Activated CD8-positive, alpha-beta T cell treated with anti-CD3 and anti-CD28 coated beads for 36 hours (primary cell): ENCODE measurements at regions of chr20 and their contacts with region 1.

Region 1: DNA sequence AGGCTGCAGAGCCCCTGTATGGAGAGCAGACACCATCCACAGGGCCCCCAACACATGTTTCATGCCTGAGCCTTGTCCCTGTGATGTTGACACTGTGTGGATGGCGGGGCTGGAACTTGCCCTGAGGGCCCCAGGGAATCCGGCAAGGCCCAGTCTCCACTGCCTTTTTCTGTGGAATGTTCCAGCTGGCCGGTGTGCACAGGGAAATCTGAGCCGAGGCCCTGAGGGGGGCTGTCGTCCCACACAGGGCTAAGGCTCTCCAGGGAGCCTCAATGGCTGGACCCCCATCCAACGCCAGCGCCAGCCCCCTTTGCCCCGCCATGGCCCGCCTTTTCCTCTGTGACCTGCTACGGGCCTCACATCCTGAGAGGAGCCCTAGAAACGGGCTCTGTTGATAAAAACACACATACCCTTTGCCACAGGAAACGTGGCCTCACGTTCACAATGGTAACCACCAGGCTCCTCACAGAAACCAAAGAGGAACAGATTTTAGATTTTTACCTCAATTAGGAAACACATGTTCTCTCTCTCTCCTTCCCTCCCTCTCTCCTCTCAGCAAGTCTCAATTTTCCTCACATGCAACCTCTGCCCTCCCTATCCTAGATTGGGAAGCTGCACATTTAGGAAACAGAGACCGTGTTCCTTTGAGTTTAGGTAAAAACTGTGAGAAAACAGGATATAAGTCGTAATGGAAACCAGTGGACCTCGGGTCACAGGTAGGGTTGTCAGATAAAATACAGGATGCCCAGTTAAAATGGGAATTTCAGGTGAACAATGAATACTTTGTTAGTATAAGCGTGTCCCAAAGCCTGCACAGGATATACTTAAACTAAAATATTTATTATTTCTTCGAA is 13.7 kb upstream of the ZNF831 start:
- DNase-seq: peak; percentile 90
- ATAC-seq: peak; percentile 61
- H3K4me3 Mint-ChIP-seq: peak overlapping the region; percentile 54
- H3K27ac Mint-ChIP-seq: peak overlapping the region; percentile 95
- H3K4me1 Mint-ChIP-seq: peaks cover 85% of the 10 kb centered on the region
- H3K27me3 Mint-ChIP-seq: no peaks in the 10 kb centered on the region
- CTCF ChIP-seq: no peak

Region 2: GRCh38 chr20:59101961-59102360 is 47.9 kb before region 1 on chr20:
- CTCF ChIA-PET with region 1: no interaction called
- POLR2A ChIA-PET with region 1: no interaction called
- intact Hi-C with region 1: no loop called
- DNase-seq: no peak
- ATAC-seq: no peak
- H3K4me3 Mint-ChIP-seq: no peak overlapping the region
- H3K27ac Mint-ChIP-seq: no peak overlapping the region
- H3K4me1 Mint-ChIP-seq: peaks cover 17% of the 10 kb centered on the region
- H3K27me3 Mint-ChIP-seq: no peaks in the 10 kb centered on the region
- CTCF ChIP-seq: no peak

Region 3: DNA sequence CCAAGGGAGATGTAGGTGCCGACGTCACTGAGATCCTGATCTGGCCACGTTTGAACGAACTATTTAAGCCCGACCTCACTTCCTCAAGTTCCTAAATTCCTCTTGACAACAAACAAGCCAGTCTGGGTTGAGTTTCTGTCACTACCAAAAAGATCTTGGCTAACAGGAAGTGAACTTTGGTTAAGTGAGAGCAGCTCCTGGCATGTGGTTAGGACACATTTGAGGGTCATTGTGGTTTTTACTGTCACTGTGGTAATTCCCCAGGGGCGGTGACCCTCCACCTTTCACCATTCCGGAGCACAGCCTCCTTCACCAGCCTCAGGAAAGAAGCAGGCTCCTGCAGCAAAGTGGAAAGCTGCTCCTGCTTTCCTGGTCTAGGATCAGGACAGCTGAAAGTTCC is 29.4 kb before region 1 on chr20:
- CTCF ChIA-PET with region 1: interaction called, 7 read pairs
- POLR2A ChIA-PET with region 1: interaction called, 44 read pairs
- intact Hi-C with region 1: loop called (anchors 2 kb)
- DNase-seq: peak; percentile 67
- ATAC-seq: peak; percentile 15
- H3K4me3 Mint-ChIP-seq: no peak overlapping the region
- H3K27ac Mint-ChIP-seq: peak overlapping the region; percentile 97
- H3K4me1 Mint-ChIP-seq: peaks cover 75% of the 10 kb centered on the region
- H3K27me3 Mint-ChIP-seq: no peaks in the 10 kb centered on the region
- CTCF ChIP-seq: no peak

Region 4: GRCh38 chr20:59177261-59178250 is 27.7 kb after region 1 on chr20:
- CTCF ChIA-PET with region 1: interaction called, 11 read pairs
- POLR2A ChIA-PET with region 1: interaction called, 5 read pairs
- intact Hi-C with region 1: no loop called
- DNase-seq: peak; percentile 70
- ATAC-seq: peak; percentile 90
- H3K4me3 Mint-ChIP-seq: peak overlapping the region; percentile 61
- H3K27ac Mint-ChIP-seq: peak overlapping the region; percentile 95
- H3K4me1 Mint-ChIP-seq: peaks cover 85% of the 10 kb centered on the region
- H3K27me3 Mint-ChIP-seq: no peaks in the 10 kb centered on the region
- CTCF ChIP-seq: no peak